Common myeloid progenitor, CD34-positive (primary cell): ENCODE measurements at regions of chr1 and their contacts with region 1.

Region 1: GRCh38 chr1:109516872-109517271 is 7.3 kb upstream of the AMIGO1 start:
- DNase-seq: no peak
- H3K4me3 ChIP-seq: no peak overlapping the region
- H3K27ac ChIP-seq: no peak overlapping the region
- H3K4me1 ChIP-seq: no peaks in the 10 kb centered on the region
- H3K27me3 ChIP-seq: peaks cover 0 to 11% (median 0%) of the 10 kb centered on the region in 5 experiments

Region 2: DNA sequence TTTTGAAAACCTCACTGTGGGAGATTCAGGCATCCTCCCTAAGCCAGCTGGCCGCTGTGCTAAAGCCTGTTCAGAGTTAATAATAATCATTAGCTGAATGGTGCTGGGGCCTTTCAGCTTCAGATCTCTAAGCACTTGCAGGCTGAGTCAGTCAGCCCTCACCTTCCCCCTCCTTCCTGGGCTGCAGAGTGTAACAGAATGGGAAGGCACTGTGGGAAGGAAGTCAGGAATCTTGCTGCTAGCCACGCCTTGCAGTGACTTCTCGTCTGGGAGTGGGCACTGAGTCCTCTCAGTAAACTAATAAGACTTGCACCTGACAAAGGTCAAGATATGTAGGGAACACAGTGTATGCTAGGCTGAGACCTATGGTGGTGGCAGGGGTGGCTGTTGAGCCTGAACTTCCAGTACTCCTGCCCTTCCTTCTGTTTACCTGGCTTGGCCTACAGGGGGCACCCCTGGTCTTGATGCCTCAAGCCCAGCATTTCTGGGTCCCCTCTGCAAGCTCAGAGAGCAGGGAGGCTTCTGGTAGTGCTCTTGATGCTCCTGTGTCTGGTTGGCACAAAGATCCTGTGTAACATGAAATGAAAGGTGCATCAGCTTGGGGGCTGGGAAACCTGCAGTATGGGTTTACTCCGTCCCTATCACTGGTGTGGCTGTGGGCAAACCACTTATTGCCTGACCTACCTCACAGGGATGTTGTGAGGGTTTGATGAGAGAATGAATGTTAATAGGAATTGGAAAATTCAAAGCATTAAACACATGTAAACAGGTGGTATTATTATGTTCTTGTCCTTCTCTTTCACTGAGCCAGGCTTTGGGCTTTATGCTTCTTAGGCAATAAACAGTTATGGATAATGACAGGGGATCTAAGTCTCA is 17.0 kb before region 1 on chr1:
- CTCF ChIA-PET with region 1: interaction called, 1,203 read pairs
- POLR2A ChIA-PET with region 1: no interaction called
- DNase-seq: peak; percentile 44 to 71 (median 62)
- H3K4me3 ChIP-seq: no peak overlapping the region
- H3K27ac ChIP-seq: no peak overlapping the region
- H3K4me1 ChIP-seq: peaks cover 0 to 26% (median 15%) of the 10 kb centered on the region in 4 experiments
- H3K27me3 ChIP-seq: no peaks in the 10 kb centered on the region